Naive thymus-derived CD4-positive, alpha-beta T cell (primary cell): ENCODE measurements at regions of chr1 and their contacts with region 1.

Region 1: GRCh38 chr1:197541411-197541810 is 233.9 kb downstream of the DENND1B start:
- DNase-seq: no peak
- ATAC-seq: no peak
- H3K4me3 ChIP-seq: no peak overlapping the region
- H3K4me3 Mint-ChIP-seq: no peak overlapping the region
- H3K27ac ChIP-seq: no peak overlapping the region
- H3K27ac Mint-ChIP-seq: no peak overlapping the region
- H3K4me1 ChIP-seq: no peaks in the 10 kb centered on the region
- H3K4me1 Mint-ChIP-seq: peaks cover 0 to 6% (median 0%) of the 10 kb centered on the region in 7 donors
- H3K27me3 ChIP-seq: no peaks in the 10 kb centered on the region
- H3K27me3 Mint-ChIP-seq: no peaks in the 10 kb centered on the region

Region 2: DNA sequence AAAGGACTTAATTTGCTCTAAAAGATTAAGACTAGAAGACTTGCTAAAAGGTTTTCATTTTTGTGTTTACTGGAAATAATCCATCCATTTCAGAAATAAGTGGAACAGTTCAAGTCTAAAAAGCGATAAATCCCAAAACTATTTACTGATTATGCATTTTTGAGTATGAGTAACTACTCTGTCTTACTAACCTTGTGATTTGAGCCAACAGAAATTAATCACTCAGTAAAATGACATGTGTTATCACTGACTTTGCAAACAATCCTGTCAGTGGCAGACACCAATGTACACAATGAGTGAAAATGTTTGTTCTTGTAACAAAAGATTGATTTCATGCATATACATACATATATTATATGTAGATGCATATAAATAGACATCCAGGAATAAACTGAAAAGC is 15.9 kb after region 1 on chr1:
- CTCF ChIA-PET with region 1: no interaction called
- POLR2A ChIA-PET with region 1: no interaction called
- intact Hi-C with region 1: loop called in 1 of 2 experiments (anchors 2 kb)
- DNase-seq: no peak
- ATAC-seq: no peak
- H3K4me3 ChIP-seq: no peak overlapping the region
- H3K4me3 Mint-ChIP-seq: no peak overlapping the region
- H3K27ac ChIP-seq: no peak overlapping the region
- H3K27ac Mint-ChIP-seq: no peak overlapping the region
- H3K4me1 ChIP-seq: no peaks in the 10 kb centered on the region
- H3K4me1 Mint-ChIP-seq: no peaks in the 10 kb centered on the region
- H3K27me3 ChIP-seq: no peaks in the 10 kb centered on the region
- H3K27me3 Mint-ChIP-seq: no peaks in the 10 kb centered on the region